Activated B cell treated with CpG ODN at 0.5 μM for 24 hours (primary cell): ENCODE measurements at regions of chr11 and their contacts with region 1.

Region 1: DNA sequence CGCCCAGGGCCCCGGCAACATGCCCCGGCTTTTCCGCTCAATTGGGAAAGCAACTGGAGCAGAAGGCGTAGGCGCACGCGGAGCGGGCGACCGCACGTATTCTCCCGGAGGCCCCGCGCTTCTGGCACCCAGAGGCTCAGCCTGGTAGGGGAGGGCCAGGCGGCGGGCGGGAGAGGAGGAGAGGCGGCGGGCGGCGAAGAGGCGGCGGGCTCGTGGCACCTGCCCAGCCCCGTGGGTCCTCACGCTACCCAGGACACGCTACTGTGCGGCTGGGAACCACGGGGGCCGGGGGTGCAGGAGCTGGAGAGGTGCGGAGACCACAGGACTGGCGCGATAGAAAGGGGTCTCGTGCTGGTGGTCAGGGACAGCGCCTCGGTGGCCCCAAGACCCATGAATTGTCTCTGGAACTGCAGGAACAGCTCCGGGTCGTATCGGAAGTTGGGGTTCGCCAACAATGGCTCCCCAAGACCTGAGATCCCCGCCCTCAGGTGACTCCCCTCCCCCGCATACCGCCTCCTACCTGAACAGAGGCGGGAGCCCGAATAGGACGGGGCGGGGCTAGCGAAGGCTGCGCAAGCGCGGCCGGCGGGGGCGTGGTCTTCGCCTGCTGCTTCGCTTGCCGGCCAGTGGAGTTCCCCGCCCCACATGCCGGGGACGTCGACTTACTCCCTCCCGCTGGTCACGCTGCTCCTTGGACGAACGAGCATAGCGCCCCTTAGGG is at the start of gene SLC37A4:
- DNase-seq: peak; percentile 99
- ATAC-seq: peak; percentile 95
- H3K4me3 Mint-ChIP-seq: peak within 1 kb of the TSS; percentile 85
- H3K27ac Mint-ChIP-seq: peak within 1 kb of the TSS; percentile 61
- H3K4me1 Mint-ChIP-seq: peaks cover 15% of the 10 kb centered on the region
- H3K27me3 Mint-ChIP-seq: no peaks in the 10 kb centered on the region
- CTCF ChIP-seq: no peak
- total RNA-seq, gene SLC37A4: 12.0 and 12.1 TPM in 2 replicates

Region 2: GRCh38 chr11:118689851-118690552 is 340.5 kb before region 1 on chr11:
- CTCF ChIA-PET with region 1: no interaction called
- POLR2A ChIA-PET with region 1: no interaction called
- intact Hi-C with region 1: loop called (anchors 2 kb)
- DNase-seq: peak; percentile 74
- ATAC-seq: peak; percentile 95
- H3K4me3 Mint-ChIP-seq: peak overlapping the region; percentile 79
- H3K27ac Mint-ChIP-seq: peak overlapping the region; percentile 15
- H3K4me1 Mint-ChIP-seq: peaks cover 12% of the 10 kb centered on the region
- H3K27me3 Mint-ChIP-seq: peaks cover 4% of the 10 kb centered on the region
- CTCF ChIP-seq: peak; percentile 55

Region 3: DNA sequence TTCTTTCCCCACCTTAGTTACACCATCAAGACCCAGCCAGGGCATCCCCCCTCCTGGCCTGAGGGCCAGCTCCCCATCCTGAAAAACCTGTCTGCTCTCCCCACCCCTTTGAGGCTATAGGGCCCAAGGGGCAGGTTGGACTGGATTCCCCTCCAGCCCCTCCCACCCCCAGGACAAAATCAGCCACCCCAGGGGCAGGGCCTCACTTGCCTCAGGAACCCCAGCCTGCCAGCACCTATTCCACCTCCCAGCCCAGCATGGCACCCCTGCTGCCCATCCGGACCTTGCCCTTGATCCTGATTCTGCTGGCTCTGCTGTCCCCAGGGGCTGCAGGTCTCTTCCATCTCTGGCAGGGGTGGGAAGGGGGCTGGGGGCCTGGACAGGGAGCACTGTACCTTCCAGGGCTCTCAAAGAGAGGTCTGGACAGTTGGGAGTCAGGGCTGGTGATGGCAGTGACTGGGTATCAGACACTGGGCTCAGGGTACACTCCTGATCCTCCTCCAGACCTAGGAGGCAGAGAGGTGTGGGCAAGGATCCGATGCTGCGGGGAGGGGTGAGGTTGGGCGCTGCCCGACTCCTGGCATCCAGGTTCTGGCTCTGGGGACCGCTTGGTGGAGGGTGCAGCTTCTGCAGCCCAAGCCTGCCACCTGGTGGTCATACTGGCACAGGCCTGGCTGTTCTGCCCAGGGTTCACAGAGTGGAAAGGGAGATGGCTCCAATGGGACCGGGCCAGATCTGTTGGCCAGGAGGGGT is 74.2 kb before region 1 on chr11 and contains the start of gene UPK2:
- CTCF ChIA-PET with region 1: no interaction called
- POLR2A ChIA-PET with region 1: no interaction called
- intact Hi-C with region 1: loop called (anchors 1 kb)
- DNase-seq: peak; percentile 81
- ATAC-seq: peak; percentile 99
- H3K4me3 Mint-ChIP-seq: no peak within 1 kb of the TSS
- H3K27ac Mint-ChIP-seq: no peak within 1 kb of the TSS
- H3K4me1 Mint-ChIP-seq: peaks cover 3% of the 10 kb centered on the region
- H3K27me3 Mint-ChIP-seq: peaks cover 26% of the 10 kb centered on the region
- CTCF ChIP-seq: peak; percentile 62
- total RNA-seq, gene UPK2: 0.27 TPM in 1 of 2 replicates, not detected in the other

Region 4: DNA sequence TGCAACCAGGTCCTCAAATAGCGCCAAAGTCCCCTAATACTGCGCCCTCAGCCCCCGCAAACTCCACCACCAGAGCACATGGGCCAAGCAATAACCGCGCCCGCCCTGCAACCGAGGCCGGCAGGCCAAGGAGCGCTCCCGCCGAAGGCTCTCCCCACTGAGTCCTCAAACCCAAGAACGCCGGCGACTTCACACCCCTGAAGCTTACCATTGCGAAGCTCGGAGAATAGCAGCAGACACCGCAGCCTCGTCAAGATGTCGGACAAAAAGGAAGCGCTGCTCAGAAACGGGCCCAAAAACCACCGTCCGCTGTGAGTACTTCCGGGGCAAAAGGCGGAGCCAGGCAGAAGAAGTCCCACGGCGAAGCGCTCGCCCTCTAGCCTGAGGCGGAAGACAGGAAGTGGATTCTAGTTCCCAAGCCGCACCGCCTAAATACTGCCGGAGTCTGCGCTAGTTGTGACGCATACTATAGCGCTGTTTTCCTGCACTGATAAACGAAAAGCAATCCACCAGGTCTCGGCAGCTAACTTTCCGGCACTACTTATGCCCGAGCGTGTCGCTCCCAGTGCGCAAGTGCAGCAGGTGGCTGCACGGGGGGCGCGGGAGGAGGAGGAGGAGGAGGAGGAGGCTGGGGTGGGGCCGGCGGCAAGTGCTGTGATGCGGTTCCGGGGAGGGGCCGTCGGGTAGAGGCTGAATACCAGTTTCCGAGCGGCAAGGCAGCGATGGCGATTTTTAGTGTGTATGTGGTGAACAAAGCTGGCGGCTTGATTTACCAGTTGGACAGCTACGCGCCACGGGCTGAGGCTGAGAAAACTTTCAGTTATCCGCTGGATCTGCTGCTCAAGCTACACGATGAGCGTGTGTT is 12.2 kb before region 1 on chr11 and contains the starts of genes RPS25 and TRAPPC4:
- CTCF ChIA-PET with region 1: interaction called, 3 read pairs
- POLR2A ChIA-PET with region 1: interaction called, 21 read pairs
- intact Hi-C with region 1: loop called (anchors 1 kb)
- DNase-seq: peak; percentile 90
- ATAC-seq: peak; percentile 87
- H3K4me3 Mint-ChIP-seq: peak within 1 kb of the TSS; percentile 99
- H3K27ac Mint-ChIP-seq: peak within 1 kb of the TSS; percentile 100
- H3K4me1 Mint-ChIP-seq: peaks cover 54% of the 10 kb centered on the region
- H3K27me3 Mint-ChIP-seq: no peaks in the 10 kb centered on the region
- CTCF ChIP-seq: no peak
- total RNA-seq, gene RPS25: 2,191 and 2,534 TPM in 2 replicates
- total RNA-seq, gene TRAPPC4: 56.8 and 60.1 TPM in 2 replicates

Region 5: GRCh38 chr11:119057000-119057769 is 26.7 kb after region 1 on chr11 and contains the start of gene HYOU1:
- CTCF ChIA-PET with region 1: no interaction called
- POLR2A ChIA-PET with region 1: interaction called, 7 read pairs
- intact Hi-C with region 1: loop called (anchors 1 kb)
- DNase-seq: peak; percentile 97
- ATAC-seq: peak; percentile 94
- H3K4me3 Mint-ChIP-seq: peak within 1 kb of the TSS; percentile 96
- H3K27ac Mint-ChIP-seq: peak within 1 kb of the TSS; percentile 95
- H3K4me1 Mint-ChIP-seq: peaks cover 40% of the 10 kb centered on the region
- H3K27me3 Mint-ChIP-seq: no peaks in the 10 kb centered on the region
- CTCF ChIP-seq: no peak
- total RNA-seq, gene HYOU1: 120 and 122 TPM in 2 replicates